PC-3 (cell line): ENCODE measurements at regions of chr10 and their contacts with region 1.

Region 1: DNA sequence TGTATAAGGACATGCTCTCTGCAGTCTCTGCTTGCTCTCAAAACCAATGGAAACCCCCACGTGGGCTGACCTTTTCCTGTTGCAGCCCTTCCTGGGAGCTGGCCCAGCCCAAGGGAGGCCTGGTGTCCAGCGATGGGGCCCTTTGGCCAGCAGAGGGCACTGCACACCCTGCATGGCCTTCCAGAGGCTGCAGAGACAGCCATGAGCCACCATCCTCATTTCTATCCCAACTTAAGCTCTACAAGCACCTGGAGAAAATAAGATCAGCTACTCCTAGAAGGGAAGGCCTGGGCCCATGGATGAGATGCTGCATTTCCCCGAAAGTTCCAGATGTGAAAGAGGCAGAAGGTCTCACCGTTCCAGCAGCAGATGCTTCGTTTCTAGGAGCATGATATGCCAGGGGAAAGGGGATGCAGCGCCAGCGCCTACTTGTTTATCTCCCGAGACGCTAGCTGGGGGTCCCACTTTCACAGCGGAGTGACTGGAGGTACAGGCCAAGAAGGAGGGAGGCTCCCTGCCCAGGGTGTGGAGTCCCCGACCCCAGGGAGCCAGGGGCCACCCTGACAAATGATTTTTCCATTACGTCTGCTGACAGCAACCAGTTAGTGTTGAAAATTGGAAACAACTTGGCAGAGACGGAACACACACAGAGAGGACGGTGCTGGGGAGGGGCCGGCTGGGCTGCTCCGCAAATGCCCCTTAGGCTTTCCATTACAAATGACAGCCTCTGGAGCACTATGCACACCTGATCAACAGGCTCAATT is 106.4 kb downstream of the ZRANB1 start:
- DNase-seq: peak; percentile 81
- ATAC-seq: peak; percentile 85
- H3K4me3 ChIP-seq: no peak overlapping the region
- H3K27ac ChIP-seq: peak overlapping the region; percentile 28; the same call in 1 of the 2 replicates
- H3K4me1 ChIP-seq: peaks cover 21% of the 10 kb centered on the region
- H3K27me3 ChIP-seq: no peaks in the 10 kb centered on the region
- CTCF ChIP-seq: peak; percentile 85

Region 2: GRCh38 chr10:124992462-124993344 is 55.6 kb before region 1 on chr10:
- CTCF ChIA-PET with region 1: interaction called, 5 read pairs
- POLR2A ChIA-PET with region 1: interaction called, 5 read pairs
- intact Hi-C with region 1: loop called (anchors 5 kb)
- DNase-seq: peak; percentile 68
- ATAC-seq: peak; percentile 64
- H3K4me3 ChIP-seq: no peak overlapping the region
- H3K27ac ChIP-seq: no peak overlapping the region
- H3K4me1 ChIP-seq: no peaks in the 10 kb centered on the region
- H3K27me3 ChIP-seq: no peaks in the 10 kb centered on the region
- CTCF ChIP-seq: peak; percentile 59

Region 3: DNA sequence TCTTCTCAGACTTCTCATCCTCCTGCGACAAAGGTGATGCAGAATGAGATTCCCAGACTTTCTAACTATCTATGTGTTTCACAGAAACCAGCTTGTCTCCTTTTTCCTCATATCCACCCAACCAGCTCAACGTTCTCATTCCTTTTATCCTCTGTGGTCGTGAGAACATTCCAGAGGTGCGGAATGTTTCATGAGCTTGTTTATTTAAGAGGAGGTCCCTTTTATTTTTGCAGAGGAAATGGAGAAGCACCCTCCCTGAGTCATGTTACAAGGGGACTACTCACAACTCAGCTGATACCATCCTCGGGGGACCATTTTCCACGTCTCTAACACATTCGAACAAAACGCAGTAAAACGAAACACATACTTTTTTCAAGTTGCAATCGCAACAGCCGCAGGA is 13.1 kb before region 1 on chr10:
- CTCF ChIA-PET with region 1: interaction called, 4 read pairs
- POLR2A ChIA-PET with region 1: interaction called, 20 read pairs
- intact Hi-C with region 1: loop called (anchors 1 kb)
- DNase-seq: peak; percentile 90
- ATAC-seq: peak; percentile 82
- H3K4me3 ChIP-seq: peak overlapping the region; percentile 50
- H3K27ac ChIP-seq: peak overlapping the region; percentile 93
- H3K4me1 ChIP-seq: peaks cover 55% of the 10 kb centered on the region
- H3K27me3 ChIP-seq: no peaks in the 10 kb centered on the region
- CTCF ChIP-seq: no peak

Region 4: GRCh38 chr10:125343118-125343925 is 295.0 kb after region 1 on chr10:
- CTCF ChIA-PET with region 1: no interaction called
- POLR2A ChIA-PET with region 1: no interaction called
- intact Hi-C with region 1: loop called (anchors 1 kb)
- DNase-seq: peak; percentile 55
- ATAC-seq: no peak
- H3K4me3 ChIP-seq: no peak overlapping the region
- H3K27ac ChIP-seq: no peak overlapping the region
- H3K4me1 ChIP-seq: peaks cover 5% of the 10 kb centered on the region; the same call in 1 of the 2 replicates
- H3K27me3 ChIP-seq: no peaks in the 10 kb centered on the region
- CTCF ChIP-seq: peak; percentile 64